GM12878 (cell line): ENCODE measurements at regions of chr18 and their contacts with region 1.

Region 1: GRCh38 chr18:59085797-59086196 is 53.9 kb upstream of the SEC11C start:
- DNase-seq: no peak
- ATAC-seq: no peak
- H3K4me3 ChIP-seq: no peak overlapping the region
- H3K27ac ChIP-seq: no peak overlapping the region
- H3K4me1 ChIP-seq: peaks cover 4% of the 10 kb centered on the region
- H3K27me3 ChIP-seq: peaks cover 0 to 3% of the 10 kb centered on the region in 2 experiments; a peak in 1 of 4 replicates
- CTCF ChIP-seq: no peak
- EP300 ChIP-seq: no peak
- POLR2A ChIP-seq: no peak
- RAD21 ChIP-seq: no peak

Region 2: GRCh38 chr18:58911766-58912165 is 174.0 kb before region 1 on chr18:
- CTCF ChIA-PET with region 1: no interaction called
- POLR2A ChIA-PET with region 1: no interaction called
- RAD21 ChIA-PET with region 1: no interaction called
- SMC1A ChIA-PET with region 1: no interaction called
- in situ Hi-C with region 1: no loop called
- intact Hi-C with region 1: no loop called
- DNase-seq: no peak
- ATAC-seq: no peak
- H3K4me3 ChIP-seq: no peak overlapping the region
- H3K27ac ChIP-seq: no peak overlapping the region
- H3K4me1 ChIP-seq: peaks cover 8% of the 10 kb centered on the region
- H3K27me3 ChIP-seq: peaks cover 0 to 2% of the 10 kb centered on the region in 2 experiments; a peak in 1 of 4 replicates
- CTCF ChIP-seq: no peak
- EP300 ChIP-seq: no peak
- POLR2A ChIP-seq: no peak
- RAD21 ChIP-seq: no peak

Region 3: DNA sequence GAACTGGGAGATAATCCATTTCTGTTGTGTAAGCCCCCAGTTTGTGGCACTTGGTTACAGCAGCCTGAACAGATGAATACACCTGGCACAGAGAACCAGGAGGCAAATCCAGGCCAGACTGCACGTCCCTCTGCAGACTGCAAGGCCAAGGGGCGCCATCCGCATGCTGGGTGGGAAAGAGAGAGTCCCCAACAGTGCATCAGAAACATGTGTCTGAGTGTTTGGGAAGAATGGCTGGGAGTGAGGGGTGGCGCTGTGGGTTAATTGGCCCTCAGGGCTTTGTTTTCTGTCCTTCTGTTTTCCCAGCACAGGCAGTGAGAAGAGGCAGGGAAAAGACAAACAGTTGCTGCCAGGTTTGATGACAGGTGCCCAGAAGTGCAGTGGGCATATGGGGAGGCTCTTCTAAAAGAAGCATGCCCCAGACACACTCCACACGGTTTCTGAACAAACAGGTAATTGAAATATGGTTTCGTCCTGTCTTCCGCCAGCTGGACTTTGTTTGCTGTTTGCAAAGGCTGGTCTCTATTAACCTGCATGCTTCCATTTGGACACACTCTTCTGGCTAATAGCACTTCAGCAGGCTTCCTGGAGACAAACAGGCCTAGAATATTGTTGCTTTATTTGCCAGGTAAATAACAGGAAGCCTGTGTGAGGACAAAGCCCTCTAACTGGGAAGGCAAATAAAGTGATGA is 10.4 kb after region 1 on chr18:
- CTCF ChIA-PET with region 1: interaction called, 11 read pairs
- POLR2A ChIA-PET with region 1: no interaction called
- RAD21 ChIA-PET with region 1: interaction called, 3 read pairs
- SMC1A ChIA-PET with region 1: interaction called, 4 read pairs
- in situ Hi-C with region 1: no loop called
- intact Hi-C with region 1: no loop called
- DNase-seq: no peak
- ATAC-seq: no peak
- H3K4me3 ChIP-seq: no peak overlapping the region
- H3K27ac ChIP-seq: no peak overlapping the region
- H3K4me1 ChIP-seq: peaks cover 13% of the 10 kb centered on the region; the same call in 1 of the 2 replicates
- H3K27me3 ChIP-seq: peaks cover 0 to 2% of the 10 kb centered on the region in 2 experiments; a peak in 2 of 4 replicates
- CTCF ChIP-seq: no peak
- EP300 ChIP-seq: no peak
- POLR2A ChIP-seq: no peak
- RAD21 ChIP-seq: no peak

Region 4: GRCh38 chr18:59220784-59221765 is 135.3 kb after region 1 on chr18:
- CTCF ChIA-PET with region 1: interaction called, 47 read pairs
- POLR2A ChIA-PET with region 1: interaction called, 7 read pairs
- RAD21 ChIA-PET with region 1: interaction called, 13 read pairs
- SMC1A ChIA-PET with region 1: interaction called, 6 read pairs
- in situ Hi-C with region 1: loop called (anchors 10 kb)
- intact Hi-C with region 1: loop called (anchors 2 kb)
- DNase-seq: no peak
- ATAC-seq: no peak
- H3K4me3 ChIP-seq: no peak overlapping the region
- H3K27ac ChIP-seq: no peak overlapping the region
- H3K4me1 ChIP-seq: no peaks in the 10 kb centered on the region
- H3K27me3 ChIP-seq: peaks cover 2 to 17% of the 10 kb centered on the region in 2 experiments; a peak in 2 of 4 replicates
- CTCF ChIP-seq: no peak
- EP300 ChIP-seq: no peak
- POLR2A ChIP-seq: no peak
- RAD21 ChIP-seq: no peak

Region 5: DNA sequence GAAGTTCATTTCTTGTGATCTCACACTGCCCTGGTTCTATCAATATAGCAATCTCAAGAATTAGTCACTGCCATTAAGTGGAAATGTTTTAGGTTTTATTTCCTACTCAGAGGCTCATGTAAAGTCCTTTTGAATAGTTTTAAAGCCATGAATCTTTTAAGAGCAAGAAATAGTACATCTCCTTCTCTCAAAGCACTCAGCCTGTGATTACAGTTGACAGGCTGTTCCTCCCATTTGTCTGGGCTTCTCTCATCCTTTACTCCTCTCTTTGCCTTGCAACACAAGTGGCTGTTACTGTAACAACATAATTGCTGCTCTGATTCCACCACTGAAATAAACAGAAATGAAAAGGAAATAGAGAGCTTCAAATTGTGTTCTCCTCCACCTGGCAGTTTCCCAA is 152.6 kb after region 1 on chr18:
- CTCF ChIA-PET with region 1: no interaction called
- POLR2A ChIA-PET with region 1: no interaction called
- RAD21 ChIA-PET with region 1: no interaction called
- SMC1A ChIA-PET with region 1: no interaction called
- in situ Hi-C with region 1: no loop called
- intact Hi-C with region 1: no loop called
- DNase-seq: no peak
- ATAC-seq: no peak
- H3K4me3 ChIP-seq: no peak overlapping the region
- H3K27ac ChIP-seq: no peak overlapping the region
- H3K4me1 ChIP-seq: no peaks in the 10 kb centered on the region
- H3K27me3 ChIP-seq: peaks cover 0 to 2% of the 10 kb centered on the region in 2 experiments; a peak in 1 of 4 replicates
- CTCF ChIP-seq: no peak
- EP300 ChIP-seq: no peak
- POLR2A ChIP-seq: no peak
- RAD21 ChIP-seq: no peak